KBM-7 (cell line): ENCODE measurements at regions of chrX and their contacts with region 1.

Region 1: DNA sequence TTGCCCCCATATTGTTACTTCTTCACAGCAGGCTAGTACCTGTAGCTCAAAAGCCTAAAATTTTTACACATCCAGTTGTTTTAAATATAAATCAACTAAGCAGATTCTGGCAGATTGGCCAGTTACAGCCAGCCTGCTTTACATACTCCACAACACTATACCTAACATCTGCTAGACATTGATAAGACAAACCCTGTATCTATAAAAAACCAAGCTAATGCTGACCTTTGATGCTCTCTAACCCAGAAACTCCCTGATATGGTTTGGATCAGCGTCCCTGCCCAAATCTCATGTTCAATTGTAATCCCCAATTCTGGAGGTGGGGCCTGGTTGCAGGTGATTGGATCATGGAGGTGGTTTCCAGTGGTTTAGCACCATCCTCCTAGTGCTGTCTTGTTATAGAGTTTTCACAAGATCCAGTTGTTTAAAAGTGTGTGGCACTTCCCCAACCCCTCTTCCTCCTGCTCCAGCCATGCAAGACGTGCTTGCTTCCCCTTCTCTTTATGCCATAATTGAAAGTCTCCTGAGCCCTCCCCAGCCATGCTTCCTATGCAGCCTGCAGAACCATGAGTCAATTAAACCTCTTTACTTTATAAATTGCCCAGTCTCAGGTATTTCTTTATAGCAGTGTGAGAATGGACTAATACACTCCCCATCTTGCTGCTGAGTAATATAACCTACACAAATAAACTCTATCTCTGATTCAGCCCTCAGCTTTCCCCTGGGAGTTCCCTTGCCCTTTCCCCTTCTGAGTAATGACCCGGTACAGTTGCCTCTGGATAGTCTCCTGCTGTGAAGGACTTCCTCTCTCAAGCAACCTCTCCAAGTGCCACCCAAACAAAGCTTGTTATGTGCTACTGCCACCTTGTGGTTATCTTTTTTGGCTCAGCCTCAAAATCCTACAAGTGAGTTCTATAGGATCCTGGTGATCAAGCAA is 39.6 kb downstream of the ZCCHC13 start:
- DNase-seq: peak; percentile 95

Region 2: DNA sequence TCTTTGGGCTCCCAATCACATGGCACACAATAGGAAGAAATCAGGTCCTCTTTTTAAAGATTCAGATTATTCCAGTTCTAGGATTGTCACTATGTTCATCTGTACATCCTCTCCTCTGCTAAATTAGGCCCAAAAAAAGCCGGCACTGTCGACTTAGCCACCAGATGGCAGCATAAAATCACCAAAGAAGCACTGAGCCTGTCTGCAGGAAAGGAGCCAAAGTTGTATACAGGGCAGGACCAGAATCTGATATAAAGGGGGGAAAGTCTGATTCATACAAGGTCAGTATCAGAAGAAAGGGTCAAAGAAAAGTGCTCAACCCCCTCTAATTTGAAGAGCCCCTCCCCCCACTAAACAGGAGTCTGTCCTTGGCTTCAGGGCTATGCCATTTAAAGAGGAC is 488.1 kb before region 1 on chrX:
- in situ Hi-C with region 1: loop called (anchors 25 kb)
- DNase-seq: peak; percentile 87

Region 3: DNA sequence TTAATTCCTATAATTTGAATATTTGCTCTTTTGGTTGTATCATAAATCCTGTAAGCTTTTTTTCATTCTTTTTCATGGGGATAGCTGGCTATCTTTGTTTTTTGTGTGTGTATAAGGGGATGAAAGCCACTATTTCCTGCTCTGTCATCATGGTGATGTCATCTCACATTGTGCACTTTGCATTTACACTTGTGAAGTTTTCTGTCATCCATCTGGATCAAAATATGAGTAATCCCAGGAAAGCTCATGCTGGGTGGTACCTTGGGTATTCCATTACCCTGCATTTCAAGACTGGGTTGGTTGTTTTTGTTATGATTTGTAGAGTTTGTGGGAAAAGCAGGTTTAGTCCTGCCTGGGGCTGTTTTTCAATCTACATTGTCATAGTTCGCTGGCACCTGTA is 413.3 kb before region 1 on chrX:
- in situ Hi-C with region 1: no loop called
- DNase-seq: no peak

Region 4: GRCh38 chrX:74015379-74016019 is 328.1 kb before region 1 on chrX:
- in situ Hi-C with region 1: loop called (anchors 25 kb)
- DNase-seq: peak; percentile 89